Posterior cingulate gyrus (tissue), 11 donors: ENCODE measurements at regions of chr7 and their contacts with region 1.

Region 1: GRCh38 chr7:156907656-156908055 is 14.7 kb upstream of the LMBR1 start:
- DNase-seq: no peak

Region 2: GRCh38 chr7:157250605-157251228 is 343.1 kb after region 1 on chr7:
- intact Hi-C with region 1: loop called (anchors 2 kb)
- DNase-seq: peak in 4 of 10 donors; percentile 22 to 79 (median 32)

Region 3: DNA sequence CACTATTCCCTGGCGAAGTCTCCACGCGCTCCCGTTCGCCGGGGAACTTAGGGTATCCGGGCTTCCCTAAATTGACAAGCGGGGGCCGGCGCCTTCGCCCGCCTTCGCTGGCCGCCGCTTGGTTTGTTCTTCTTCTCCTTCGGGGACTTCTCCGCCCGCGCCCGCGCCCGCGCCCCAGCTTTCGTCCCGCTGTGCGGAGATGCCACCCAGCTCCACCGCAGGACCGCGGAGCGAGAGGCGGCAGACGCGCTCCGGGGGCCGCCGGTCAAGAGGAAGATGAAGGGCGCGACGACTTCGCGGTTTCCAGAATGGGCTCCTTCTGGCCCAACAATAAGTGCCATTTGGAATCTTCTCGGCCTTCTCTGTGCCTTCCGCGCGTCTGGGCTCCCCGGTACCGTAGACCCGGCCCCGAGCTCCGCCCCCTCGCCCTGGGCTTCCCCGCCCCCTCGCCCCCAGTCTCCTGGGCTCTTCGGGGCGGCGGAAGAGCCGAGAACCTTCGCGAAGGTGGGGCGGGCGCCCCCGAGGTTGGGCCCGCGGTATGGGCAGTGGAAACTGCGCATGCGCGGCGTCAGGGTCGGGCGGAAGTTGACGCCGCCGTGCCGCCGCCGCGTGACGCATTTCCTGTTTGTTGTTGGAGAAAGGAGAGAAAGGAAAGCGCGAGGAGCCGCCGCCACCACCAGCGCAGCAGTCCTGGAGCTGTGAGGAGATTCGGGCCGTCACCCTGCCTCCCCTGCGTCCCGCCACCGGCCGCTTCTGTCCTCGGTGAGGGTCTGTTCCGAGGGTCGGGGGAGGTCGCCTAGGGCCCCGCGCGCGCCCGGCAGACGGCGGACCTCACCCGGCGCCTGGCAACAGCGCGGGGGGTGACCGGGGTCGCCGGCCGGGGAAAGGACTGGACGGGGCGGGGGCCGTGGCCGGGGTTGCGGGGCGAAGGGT is 429.0 kb after region 1 on chr7 and contains the start of gene DNAJB6:
- intact Hi-C with region 1: no loop called
- DNase-seq: peak; percentile 82 to 98 (median 90)